ENCODE measurements at regions of chr12 and their contacts with region 1.

Region 1: DNA sequence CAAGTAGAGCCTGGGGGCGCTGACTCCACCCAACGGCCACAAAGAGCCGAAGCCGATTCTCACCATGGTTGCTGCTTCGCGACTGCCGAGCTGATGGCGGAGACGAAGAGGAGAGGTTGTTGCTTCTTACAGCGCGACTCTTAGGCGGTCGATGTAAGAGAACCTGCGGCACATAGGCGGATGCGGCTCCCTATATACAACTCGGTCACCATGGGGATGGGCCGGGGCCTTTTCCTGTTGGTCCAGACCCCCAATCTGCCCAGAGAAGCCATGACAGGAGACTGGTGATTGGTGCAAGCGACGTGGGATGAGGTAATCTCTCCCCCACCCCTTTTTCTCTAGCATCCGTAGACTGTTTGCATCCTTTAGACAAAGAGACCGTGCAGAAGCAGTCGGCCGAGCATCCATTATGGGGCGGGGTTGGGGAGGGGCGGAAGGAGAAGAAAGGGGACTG is at the start of gene TUBA1A:
- DNase-seq: peak; percentile 91 to 94 (median 92)
- H3K4me3 ChIP-seq: peak within 1 kb of the TSS; percentile 57 to 99 (median 72)
- H3K4me3 Mint-ChIP-seq: peak within 1 kb of the TSS; percentile 96 to 97
- H3K27ac ChIP-seq: peak within 1 kb of the TSS; percentile 85
- H3K27ac Mint-ChIP-seq: peak within 1 kb of the TSS; percentile 94 to 99 (median 97)
- H3K4me1 ChIP-seq: peaks cover 21 to 31% of the 10 kb centered on the region in 2 donors
- H3K4me1 Mint-ChIP-seq: peaks cover 31% of the 10 kb centered on the region
- H3K27me3 ChIP-seq: no peaks in the 10 kb centered on the region
- H3K27me3 Mint-ChIP-seq: peaks cover 2 to 3% (median 2%) of the 10 kb centered on the region in 3 donors
- CTCF ChIP-seq: no peak
- polyA plus RNA-seq, gene TUBA1A: 859 to 1,779 (median 946) TPM

Region 2: GRCh38 chr12:49130151-49131050 is 58.5 kb before region 1 on chr12:
- intact Hi-C with region 1: loop called (anchors 5 kb)
- DNase-seq: peak; percentile 94 to 96 (median 96)
- H3K4me3 ChIP-seq: peak overlapping the region; percentile 84 to 99 (median 98)
- H3K4me3 Mint-ChIP-seq: peak overlapping the region; percentile 94 to 97
- H3K27ac ChIP-seq: peak overlapping the region; percentile 94 to 97
- H3K27ac Mint-ChIP-seq: peak overlapping the region; percentile 94 to 96 (median 96)
- H3K4me1 ChIP-seq: peaks cover 27 to 43% of the 10 kb centered on the region in 2 donors
- H3K4me1 Mint-ChIP-seq: peaks cover 38% of the 10 kb centered on the region
- H3K27me3 ChIP-seq: no peaks in the 10 kb centered on the region
- H3K27me3 Mint-ChIP-seq: no peaks in the 10 kb centered on the region
- CTCF ChIP-seq: peak; percentile 98

Region 3: GRCh38 chr12:49146406-49146805 is 42.5 kb before region 1 on chr12:
- intact Hi-C with region 1: no loop called
- DNase-seq: no peak
- H3K4me3 ChIP-seq: no peak overlapping the region
- H3K4me3 Mint-ChIP-seq: no peak overlapping the region
- H3K27ac ChIP-seq: no peak overlapping the region
- H3K27ac Mint-ChIP-seq: no peak overlapping the region
- H3K4me1 ChIP-seq: peaks cover 0 to 6% of the 10 kb centered on the region in 2 donors
- H3K4me1 Mint-ChIP-seq: peaks cover 4% of the 10 kb centered on the region
- H3K27me3 ChIP-seq: no peaks in the 10 kb centered on the region
- H3K27me3 Mint-ChIP-seq: no peaks in the 10 kb centered on the region
- CTCF ChIP-seq: no peak